ENCODE measurements at regions of chr4 and their contacts with region 1.

Region 1: DNA sequence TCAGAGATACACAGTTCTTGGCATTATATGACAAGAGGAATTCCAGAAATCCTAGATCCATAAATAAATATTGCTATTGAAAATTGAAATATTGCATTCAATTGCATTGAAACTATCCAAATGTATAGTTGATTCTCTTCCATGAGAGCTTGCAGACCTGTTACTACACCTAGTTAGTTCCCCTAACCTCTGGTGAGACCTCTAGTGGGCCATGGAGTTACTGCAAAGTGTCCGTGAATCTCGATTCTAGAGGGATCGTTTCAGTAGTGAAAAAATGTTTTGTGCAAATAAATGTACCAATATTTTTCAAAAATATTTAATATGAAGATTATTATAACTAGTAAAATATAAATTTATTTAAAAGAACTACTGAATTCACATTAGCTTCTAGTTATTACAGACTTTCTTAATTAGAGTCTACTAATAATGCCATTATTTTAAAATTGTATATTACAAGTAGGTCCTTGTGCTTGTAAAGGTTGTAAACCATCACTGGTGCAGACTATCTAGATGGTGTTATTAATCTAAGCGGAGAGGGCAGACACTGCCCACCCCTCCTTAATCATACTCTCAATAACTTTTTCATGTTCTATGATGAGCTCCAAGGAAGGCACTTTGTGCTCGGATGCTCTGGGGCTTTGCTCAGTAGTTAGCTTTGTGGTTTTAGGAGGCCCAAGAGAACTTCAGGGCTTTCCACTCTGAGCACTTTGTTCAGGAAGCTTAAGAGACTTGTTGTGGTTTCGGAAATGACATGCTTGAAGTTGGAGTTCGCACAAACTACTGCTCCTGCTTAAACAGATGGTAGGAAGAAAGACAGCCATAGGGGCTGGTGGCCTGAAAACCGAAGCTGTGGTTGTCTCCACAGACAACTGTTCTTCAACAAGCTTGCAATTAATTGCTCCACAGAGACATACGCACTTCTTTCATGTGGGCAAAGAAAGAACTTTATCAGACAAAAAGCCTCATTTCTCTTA is 42.8 kb downstream of the IL21 start:
- DNase-seq: peak in 5 of 10 donors; percentile 22 to 55 (median 50)

Region 2: GRCh38 chr4:121900132-121900983 is 677.7 kb before region 1 on chr4:
- intact Hi-C with region 1: loop called (anchors 2 kb)
- DNase-seq: peak in 5 of 10 donors; percentile 15 to 47 (median 27)

Region 3: GRCh38 chr4:121950212-121950679 is 627.8 kb before region 1 on chr4:
- intact Hi-C with region 1: loop called (anchors 2 kb)
- DNase-seq: peak; percentile 58 to 96 (median 81)

Region 4: DNA sequence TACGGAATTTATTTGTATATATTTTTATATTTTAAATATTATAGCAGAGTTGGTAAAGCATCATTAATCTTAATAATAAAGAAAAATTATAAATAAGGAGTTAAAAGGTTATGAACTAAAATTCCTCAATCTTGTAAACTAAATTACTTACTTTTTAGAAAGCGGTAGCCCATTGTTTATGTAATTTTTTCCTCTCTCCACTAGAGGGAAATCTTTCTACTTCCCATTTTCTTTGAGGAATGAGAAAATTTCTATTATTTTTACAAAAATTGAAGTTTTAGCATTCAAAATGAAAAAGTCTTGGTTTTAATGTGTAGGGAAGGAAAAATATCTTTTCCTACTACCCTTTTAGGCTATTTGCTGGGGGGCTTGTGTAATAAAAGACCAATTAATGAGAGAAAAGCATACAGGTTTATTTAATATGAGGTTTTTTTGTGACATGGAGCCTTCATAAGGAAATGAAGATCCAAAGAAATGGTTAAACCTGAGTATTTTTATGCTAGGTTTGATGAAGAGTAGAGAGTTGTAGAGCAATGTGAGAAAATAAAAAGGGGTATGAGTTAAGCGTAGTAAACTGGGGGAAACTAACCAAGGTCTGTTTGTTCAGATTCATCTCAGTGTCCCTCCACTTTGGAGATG is 268.0 kb before region 1 on chr4:
- intact Hi-C with region 1: loop called (anchors 5 kb)
- DNase-seq: no peak